GM18951 (cell line): ENCODE measurements at regions of chr11 and their contacts with region 1.

Region 1: DNA sequence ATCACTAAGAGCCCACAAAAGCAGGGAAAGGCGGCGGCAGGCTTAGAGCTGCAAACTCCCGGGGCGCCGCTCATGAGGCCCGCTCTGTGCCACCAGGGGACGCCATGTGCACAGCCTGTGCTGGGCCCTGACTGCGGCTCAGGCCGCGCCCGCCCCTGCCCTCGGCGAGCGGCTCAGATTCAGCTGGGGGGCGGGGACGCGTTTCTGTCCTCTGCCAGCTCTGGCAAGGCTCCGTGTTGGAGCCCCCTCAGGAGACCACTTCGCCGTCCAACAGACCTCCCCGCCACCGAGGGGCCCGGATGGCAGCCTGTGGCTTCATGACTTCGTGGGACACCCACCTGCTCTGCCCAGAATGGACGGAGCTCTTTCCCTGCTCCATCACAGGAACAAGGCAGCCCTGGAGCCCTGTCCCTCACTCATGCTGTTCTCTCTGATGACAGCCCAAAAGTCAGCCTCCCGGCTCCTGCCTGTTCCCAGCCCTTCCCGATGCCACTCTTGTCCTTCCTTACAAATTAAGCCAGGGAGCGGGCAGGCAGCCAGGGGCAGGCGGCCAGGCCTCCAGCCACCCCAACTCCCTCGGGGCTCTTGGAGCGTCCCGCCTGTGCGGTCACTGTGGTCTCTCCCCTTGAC is 69.1 kb downstream of the NAT10 start:
- POLR2A ChIP-seq: no peak

Region 2: GRCh38 chr11:33857933-33858371 is 316.6 kb before region 1 on chr11:
- in situ Hi-C with region 1: loop called (anchors 25 kb)
- POLR2A ChIP-seq: no peak

Region 3: GRCh38 chr11:34027516-34028408 is 146.8 kb before region 1 on chr11:
- in situ Hi-C with region 1: no loop called
- POLR2A ChIP-seq: no peak

Region 4: DNA sequence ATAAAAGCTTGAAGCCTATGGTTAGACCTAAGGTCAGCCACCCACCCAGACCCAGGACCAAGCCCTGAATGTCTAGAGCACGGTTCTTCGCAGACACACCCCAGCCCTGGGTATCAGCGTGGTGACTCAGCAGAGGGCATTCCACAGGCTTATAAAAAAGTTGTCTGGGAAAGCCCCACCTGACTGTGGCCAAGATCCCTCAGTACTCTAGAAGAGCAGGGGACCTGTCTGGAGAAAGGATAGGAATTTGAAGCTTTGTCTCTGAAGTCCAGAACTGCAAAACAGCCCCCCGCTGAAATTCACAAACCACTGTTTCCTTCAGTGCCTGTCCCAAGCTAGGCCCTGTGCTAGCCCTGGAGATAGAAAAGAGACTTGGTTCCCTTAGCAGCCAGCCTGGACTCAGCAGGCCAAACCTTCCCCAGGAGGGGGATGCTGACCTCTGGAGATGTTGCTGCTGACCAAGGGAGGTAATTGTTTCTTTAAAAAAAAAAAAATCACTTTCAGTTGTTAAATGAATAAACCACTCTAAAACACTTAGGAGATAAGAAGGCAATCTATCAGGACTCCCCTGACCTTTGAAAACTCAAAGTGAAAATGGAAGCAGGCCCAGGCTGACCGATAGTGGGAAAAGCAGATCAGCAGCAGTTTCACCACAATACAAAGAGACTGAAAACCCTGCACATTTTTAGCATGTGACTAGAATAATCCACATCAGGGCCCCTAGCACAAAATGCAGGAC is 69.4 kb after region 1 on chr11:
- in situ Hi-C with region 1: no loop called
- POLR2A ChIP-seq: no peak

Region 5: DNA sequence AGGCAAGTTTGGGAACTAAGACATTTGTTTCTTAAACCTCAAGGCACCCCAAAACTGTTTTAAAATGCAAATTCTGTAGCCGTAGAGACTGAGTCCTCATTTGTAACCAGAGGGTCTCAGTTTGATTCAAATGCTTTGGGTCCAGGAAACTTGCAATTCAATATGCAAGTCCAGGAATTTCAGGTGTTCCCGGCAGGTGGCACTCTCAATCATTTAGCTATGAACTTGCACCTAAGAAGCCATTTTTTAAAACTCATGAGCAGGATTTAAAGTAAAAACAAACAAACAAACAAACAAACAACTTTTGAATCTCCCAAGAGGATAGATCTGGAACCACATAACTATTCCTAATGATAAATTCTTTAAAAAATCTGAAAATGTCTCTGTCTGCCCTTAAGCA is 192.0 kb after region 1 on chr11:
- in situ Hi-C with region 1: loop called (anchors 10 kb)
- POLR2A ChIP-seq: no peak